Endothelial cell of umbilical vein (primary cell): ENCODE measurements at regions of chr5 and their contacts with region 1.

Region 1: GRCh38 chr5:97534166-97534565 is 351.1 kb upstream of the RIOK2 start:
- DNase-seq: peak; percentile 75
- H3K4me3 ChIP-seq: no peak overlapping the region
- H3K27ac ChIP-seq: no peak overlapping the region
- H3K4me1 ChIP-seq: peaks cover 3% of the 10 kb centered on the region
- H3K27me3 ChIP-seq: no peaks in the 10 kb centered on the region
- CTCF ChIP-seq: peak; percentile 47 to 68
- POLR2A ChIP-seq: no peak

Region 2: DNA sequence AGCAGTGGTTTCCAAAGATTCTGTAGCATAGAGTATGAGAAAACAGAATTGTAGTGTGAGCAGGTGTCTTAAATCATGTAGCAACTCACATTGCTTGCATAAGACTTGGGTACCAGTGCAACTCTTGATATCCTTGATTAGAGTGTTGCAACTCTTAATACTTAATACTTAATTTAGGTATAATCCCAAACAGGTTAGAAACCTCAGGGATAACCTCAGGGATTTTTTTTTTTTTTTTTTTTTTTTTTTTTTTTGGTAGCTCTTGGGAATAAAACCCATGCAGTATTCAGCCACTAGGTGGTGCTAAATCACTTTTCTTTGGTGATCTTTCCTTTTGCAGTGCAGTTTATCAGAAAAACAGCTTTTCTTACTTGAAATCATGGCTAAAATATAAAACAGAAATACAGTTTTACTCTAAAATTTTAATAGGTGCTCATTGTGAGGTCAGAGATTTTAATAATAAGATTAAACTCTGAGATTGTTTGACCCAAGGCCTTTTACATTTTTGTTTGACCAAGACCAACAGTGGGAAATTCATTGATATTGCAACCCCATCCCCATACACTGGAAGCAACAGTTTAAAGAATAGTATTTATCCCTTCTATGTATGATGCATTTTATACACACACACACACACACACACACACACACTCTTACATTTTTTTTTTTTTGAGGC is 781.7 kb before region 1 on chr5:
- CTCF ChIA-PET with region 1: interaction called, 11 read pairs
- POLR2A ChIA-PET with region 1: no interaction called
- dilution Hi-C with region 1: no loop called
- intact Hi-C with region 1: no loop called
- DNase-seq: peak; percentile 71
- H3K4me3 ChIP-seq: no peak overlapping the region
- H3K27ac ChIP-seq: no peak overlapping the region
- H3K4me1 ChIP-seq: peaks cover 3% of the 10 kb centered on the region
- H3K27me3 ChIP-seq: no peaks in the 10 kb centered on the region
- CTCF ChIP-seq: peak; percentile 36 to 55
- POLR2A ChIP-seq: no peak

Region 3: DNA sequence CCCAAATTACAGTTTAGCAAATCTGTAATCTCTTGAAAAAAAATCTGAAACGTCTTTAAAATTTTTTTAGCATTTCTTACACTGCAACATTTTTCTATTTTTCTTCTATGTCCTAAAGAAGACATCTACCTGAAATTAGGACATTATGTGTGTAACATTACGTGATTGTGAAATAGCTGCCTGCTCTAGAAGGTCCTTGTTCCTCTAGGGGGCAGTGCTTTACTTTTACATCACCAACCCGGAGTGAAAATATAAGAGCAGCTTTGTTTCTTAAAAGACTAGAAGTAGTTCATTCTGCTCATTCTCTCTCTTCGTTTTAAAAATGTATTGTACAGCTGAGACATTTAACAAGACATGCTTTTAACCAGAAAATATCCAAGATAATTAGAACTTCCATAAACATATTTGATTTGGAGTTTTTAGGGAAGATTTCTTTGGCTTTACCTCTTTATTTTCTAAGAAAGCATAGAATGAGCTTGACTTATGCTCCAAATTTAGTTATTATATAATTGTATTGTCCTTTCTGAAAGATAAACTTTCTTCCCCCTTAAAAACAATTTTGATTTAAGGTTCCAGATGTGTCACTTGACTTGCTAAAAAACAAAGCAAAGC is 303.0 kb before region 1 on chr5:
- CTCF ChIA-PET with region 1: interaction called, 140 read pairs
- POLR2A ChIA-PET with region 1: no interaction called
- dilution Hi-C with region 1: no loop called
- intact Hi-C with region 1: loop called (anchors 1 kb)
- DNase-seq: peak; percentile 78
- H3K4me3 ChIP-seq: no peak overlapping the region
- H3K27ac ChIP-seq: no peak overlapping the region
- H3K4me1 ChIP-seq: peaks cover 6% of the 10 kb centered on the region
- H3K27me3 ChIP-seq: no peaks in the 10 kb centered on the region
- CTCF ChIP-seq: peak; percentile 54 to 69
- POLR2A ChIP-seq: no peak

Region 4: DNA sequence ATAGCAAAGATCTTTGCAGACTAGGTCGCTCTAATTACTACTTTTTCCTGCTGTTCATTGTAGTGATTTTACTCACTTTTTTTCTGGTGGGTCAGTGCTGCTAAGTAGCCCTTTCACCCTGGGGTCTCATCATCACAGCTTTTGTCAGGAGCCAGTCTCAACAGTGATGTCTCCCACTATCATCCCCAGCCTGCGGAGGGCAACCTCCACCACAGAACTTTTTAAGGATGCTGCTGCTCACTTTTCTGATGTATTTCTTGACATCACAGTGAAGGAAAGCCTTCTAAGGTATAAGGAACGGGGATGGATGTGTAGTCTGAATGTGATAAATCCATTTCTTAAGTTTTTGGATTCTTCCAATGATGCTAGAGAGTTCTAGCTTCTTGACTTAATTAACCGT is 108.7 kb before region 1 on chr5:
- CTCF ChIA-PET with region 1: interaction called, 17 read pairs
- POLR2A ChIA-PET with region 1: no interaction called
- dilution Hi-C with region 1: no loop called
- intact Hi-C with region 1: no loop called
- DNase-seq: peak; percentile 24
- H3K4me3 ChIP-seq: no peak overlapping the region
- H3K27ac ChIP-seq: no peak overlapping the region
- H3K4me1 ChIP-seq: no peaks in the 10 kb centered on the region
- H3K27me3 ChIP-seq: no peaks in the 10 kb centered on the region
- CTCF ChIP-seq: peak; percentile 36 to 43
- POLR2A ChIP-seq: no peak

Region 5: GRCh38 chr5:97547999-97548738 is 14.0 kb after region 1 on chr5:
- CTCF ChIA-PET with region 1: interaction called, 20 read pairs
- POLR2A ChIA-PET with region 1: no interaction called
- dilution Hi-C with region 1: no loop called
- intact Hi-C with region 1: no loop called
- DNase-seq: peak; percentile 84
- H3K4me3 ChIP-seq: no peak overlapping the region
- H3K27ac ChIP-seq: no peak overlapping the region
- H3K4me1 ChIP-seq: peaks cover 23% of the 10 kb centered on the region
- H3K27me3 ChIP-seq: no peaks in the 10 kb centered on the region
- CTCF ChIP-seq: no peak
- POLR2A ChIP-seq: no peak

Region 6: DNA sequence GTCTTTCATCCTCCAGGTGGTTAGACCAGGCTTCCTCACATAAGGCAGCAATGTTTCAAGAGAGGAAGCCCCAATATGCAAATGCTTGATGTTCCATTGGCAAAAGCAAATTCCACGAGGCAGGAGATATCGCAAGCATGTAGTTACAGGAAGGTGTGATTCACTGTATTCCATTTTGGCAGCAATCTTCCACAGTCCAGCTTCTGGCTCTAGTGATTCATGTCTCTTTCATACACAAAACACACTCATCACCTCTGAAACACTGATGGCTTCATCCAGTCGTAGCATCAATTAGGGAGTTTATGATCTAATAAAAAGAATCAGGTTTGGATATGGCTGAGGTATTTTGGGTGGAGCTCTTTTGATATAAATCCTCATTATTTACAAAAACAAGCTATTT is 201.0 kb after region 1 on chr5:
- CTCF ChIA-PET with region 1: no interaction called
- POLR2A ChIA-PET with region 1: no interaction called
- dilution Hi-C with region 1: no loop called
- intact Hi-C with region 1: no loop called
- DNase-seq: peak; percentile 63
- H3K4me3 ChIP-seq: no peak overlapping the region
- H3K27ac ChIP-seq: no peak overlapping the region
- H3K4me1 ChIP-seq: no peaks in the 10 kb centered on the region
- H3K27me3 ChIP-seq: no peaks in the 10 kb centered on the region
- CTCF ChIP-seq: no peak
- POLR2A ChIP-seq: no peak

Region 7: GRCh38 chr5:97838214-97838613 is 304.0 kb after region 1 on chr5:
- CTCF ChIA-PET with region 1: interaction called, 6 read pairs
- POLR2A ChIA-PET with region 1: no interaction called
- dilution Hi-C with region 1: no loop called
- intact Hi-C with region 1: loop called (anchors 5 kb)
- DNase-seq: peak; percentile 96
- H3K4me3 ChIP-seq: no peak overlapping the region
- H3K27ac ChIP-seq: peak overlapping the region; percentile 92
- H3K4me1 ChIP-seq: peaks cover 46% of the 10 kb centered on the region
- H3K27me3 ChIP-seq: no peaks in the 10 kb centered on the region
- CTCF ChIP-seq: no peak
- POLR2A ChIP-seq: peak; percentile 47

Region 8: GRCh38 chr5:98349251-98349995 is 815.3 kb after region 1 on chr5:
- CTCF ChIA-PET with region 1: no interaction called
- POLR2A ChIA-PET with region 1: no interaction called
- dilution Hi-C with region 1: no loop called
- intact Hi-C with region 1: loop called (anchors 5 kb)
- DNase-seq: peak; percentile 29
- H3K4me3 ChIP-seq: no peak overlapping the region
- H3K27ac ChIP-seq: peak overlapping the region; percentile 18
- H3K4me1 ChIP-seq: no peaks in the 10 kb centered on the region
- H3K27me3 ChIP-seq: no peaks in the 10 kb centered on the region
- CTCF ChIP-seq: peak; percentile 16 to 47
- POLR2A ChIP-seq: no peak